HepG2 (cell line): ENCODE measurements at regions of chr2 and their contacts with region 1.

Region 1: DNA sequence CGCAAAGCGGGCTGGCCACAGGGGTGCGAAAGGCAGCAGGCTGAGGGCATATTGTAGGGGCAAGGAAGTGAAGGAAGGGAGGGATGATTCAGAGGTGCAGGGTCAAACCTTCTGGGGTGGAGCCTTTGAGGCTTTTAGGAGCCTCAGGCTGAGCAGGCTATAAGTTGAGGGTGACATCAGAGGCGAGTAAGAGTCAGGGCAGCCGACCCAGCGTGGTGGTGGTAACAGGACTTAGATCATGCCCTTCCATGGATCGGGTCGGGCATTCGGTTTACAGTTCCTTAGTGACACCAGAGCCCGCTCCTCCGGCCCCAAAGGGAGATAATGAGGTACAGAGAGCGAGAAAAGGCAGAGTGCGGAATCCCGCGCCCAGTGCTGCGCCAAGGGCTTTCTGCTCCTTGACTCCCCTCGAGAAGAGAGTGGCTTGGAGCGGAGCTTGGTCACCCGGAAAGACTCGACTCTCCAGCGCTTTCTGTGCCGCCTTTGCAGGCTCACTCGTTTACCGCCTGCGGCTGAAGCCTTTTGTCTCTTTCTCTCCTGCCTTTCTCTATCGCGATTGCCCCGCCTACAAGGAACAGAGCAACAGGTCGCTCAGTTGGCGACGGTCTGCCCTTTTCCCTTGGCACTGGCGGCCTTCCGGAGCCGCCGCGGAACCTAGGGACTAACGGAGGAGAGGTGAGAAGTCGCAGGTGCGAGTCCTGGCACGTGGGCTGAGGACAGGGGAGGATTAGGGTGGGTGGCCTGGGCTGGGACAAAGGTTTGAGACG is 720 bp downstream of the LBX2 start:
- DNase-seq: no peak
- ATAC-seq: no peak
- H3K4me3 ChIP-seq: peak overlapping the region; percentile 32 to 66 (median 53); a peak in 5 of 6 replicates
- H3K27ac ChIP-seq: peak overlapping the region; percentile 70
- H3K4me1 ChIP-seq: peaks cover 66% of the 10 kb centered on the region
- H3K27me3 ChIP-seq: no peaks in the 10 kb centered on the region; a peak in 1 of 5 replicates
- CTCF ChIP-seq: no peak
- EP300 ChIP-seq: no peak
- POLR2A ChIP-seq: peak in 1 of 2 experiments; percentile 66; a peak in 2 of 4 replicates
- RAD21 ChIP-seq: no peak

Region 2: GRCh38 chr2:72694715-72695496 is 1803.8 kb before region 1 on chr2:
- CTCF ChIA-PET with region 1: no interaction called
- POLR2A ChIA-PET with region 1: no interaction called
- in situ Hi-C with region 1: no loop called
- intact Hi-C with region 1: loop called (anchors 10 kb)
- DNase-seq: peak; percentile 94
- ATAC-seq: peak; percentile 97
- H3K4me3 ChIP-seq: no peak overlapping the region
- H3K27ac ChIP-seq: no peak overlapping the region
- H3K4me1 ChIP-seq: peaks cover 21% of the 10 kb centered on the region
- H3K27me3 ChIP-seq: no peaks in the 10 kb centered on the region
- CTCF ChIP-seq: no peak
- EP300 ChIP-seq: peak in 1 of 2 experiments; percentile 88; a peak in 2 of 4 replicates
- POLR2A ChIP-seq: no peak
- RAD21 ChIP-seq: no peak

Region 3: GRCh38 chr2:74414881-74415761 is 83.6 kb before region 1 on chr2:
- CTCF ChIA-PET with region 1: no interaction called
- POLR2A ChIA-PET with region 1: no interaction called
- in situ Hi-C with region 1: no loop called
- intact Hi-C with region 1: no loop called
- DNase-seq: no peak
- ATAC-seq: no peak
- H3K4me3 ChIP-seq: no peak overlapping the region
- H3K27ac ChIP-seq: no peak overlapping the region
- H3K4me1 ChIP-seq: peaks cover 29% of the 10 kb centered on the region
- H3K27me3 ChIP-seq: peaks cover 0 to 7% of the 10 kb centered on the region in 2 experiments; a peak in 3 of 5 replicates
- CTCF ChIP-seq: no peak
- EP300 ChIP-seq: no peak
- POLR2A ChIP-seq: no peak
- RAD21 ChIP-seq: no peak